ENCODE measurements at regions of chr11 and their contacts with region 1.

Region 1: GRCh38 chr11:69296890-69297786 is 3.2 kb downstream of the MYEOV start:
- DNase-seq: peak; percentile 91
- ATAC-seq: peak; percentile 66
- H3K4me3 ChIP-seq: peak overlapping the region; percentile 38; the same call in 1 of the 2 replicates
- H3K27ac ChIP-seq: peak overlapping the region; percentile 89
- H3K4me1 ChIP-seq: peaks cover 32% of the 10 kb centered on the region
- H3K27me3 ChIP-seq: no peaks in the 10 kb centered on the region
- CTCF ChIP-seq: no peak
- EP300 ChIP-seq: peak; percentile 78 to 90; a peak in 3 of 4 replicates
- POLR2A ChIP-seq: no peak
- RAD21 ChIP-seq: 0 out of 2 replicates have a peak, but pooled peaks have one; percentile 5

Region 2: DNA sequence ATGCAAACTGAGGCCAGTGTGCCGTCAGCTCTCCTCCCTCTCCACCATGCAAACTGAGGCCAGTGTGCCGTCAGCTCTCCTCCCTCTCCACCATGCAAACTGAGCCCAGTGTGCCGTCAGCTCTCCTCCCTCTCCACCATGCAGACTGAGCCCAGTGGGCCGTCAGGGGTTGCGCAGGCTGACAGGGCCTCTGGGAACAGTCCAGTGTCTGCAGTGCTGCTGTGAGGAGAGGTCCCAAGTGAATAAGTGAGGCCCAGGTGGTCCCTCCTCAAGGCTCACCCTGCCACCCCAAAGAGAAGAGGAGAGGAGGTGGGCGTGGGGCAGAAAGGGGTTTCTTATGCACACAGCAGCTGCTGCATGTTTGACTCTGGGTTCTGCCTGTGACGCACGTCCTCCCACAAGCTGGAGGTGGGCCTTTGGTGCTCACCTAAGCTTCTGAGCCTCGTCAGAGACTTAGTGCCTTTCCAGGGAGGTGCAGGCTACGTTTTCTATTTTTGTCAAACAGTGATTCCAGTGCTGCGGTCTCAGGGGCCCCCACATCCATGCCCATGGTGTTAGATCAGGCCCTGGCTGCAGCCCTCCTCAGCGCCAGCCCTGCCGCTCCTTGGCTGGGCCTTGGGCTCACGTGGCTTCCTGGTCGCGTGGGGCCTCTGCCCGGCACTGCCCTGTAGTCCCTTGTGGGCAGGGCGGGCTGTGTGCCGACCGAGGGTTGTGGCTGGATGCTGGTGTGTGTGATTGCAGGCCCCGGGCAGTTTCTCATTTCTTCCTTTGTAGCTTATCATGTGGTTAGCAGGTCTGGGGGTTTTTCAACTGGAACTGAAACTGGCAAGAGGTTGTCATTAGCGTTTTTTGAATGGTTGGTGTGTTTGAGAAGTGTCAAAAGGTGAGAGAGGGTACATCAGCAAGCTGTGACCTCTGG is 241.3 kb before region 1 on chr11:
- CTCF ChIA-PET with region 1: no interaction called
- POLR2A ChIA-PET with region 1: no interaction called
- RAD21 ChIA-PET with region 1: interaction called, 3 read pairs
- SMC1A ChIA-PET with region 1: interaction called, 5 read pairs
- in situ Hi-C with region 1: no loop called
- intact Hi-C with region 1: loop called (anchors 1 kb)
- DNase-seq: peak; percentile 94
- ATAC-seq: peak; percentile 85
- H3K4me3 ChIP-seq: peak overlapping the region; percentile 43; the same call in 1 of the 2 replicates
- H3K27ac ChIP-seq: peak overlapping the region; percentile 92
- H3K4me1 ChIP-seq: peaks cover 50% of the 10 kb centered on the region
- H3K27me3 ChIP-seq: no peaks in the 10 kb centered on the region
- CTCF ChIP-seq: no peak
- EP300 ChIP-seq: peak; percentile 85 to 87
- POLR2A ChIP-seq: peak; percentile 47; the same call in 1 of the 2 replicates
- RAD21 ChIP-seq: no peak

Region 3: GRCh38 chr11:69166218-69167115 is 130.7 kb before region 1 on chr11:
- CTCF ChIA-PET with region 1: interaction called, 3 read pairs
- POLR2A ChIA-PET with region 1: interaction called, 3 read pairs
- RAD21 ChIA-PET with region 1: interaction called, 15 read pairs
- SMC1A ChIA-PET with region 1: interaction called, 5 read pairs
- in situ Hi-C with region 1: no loop called
- intact Hi-C with region 1: loop called (anchors 2 kb)
- DNase-seq: peak; percentile 75
- ATAC-seq: peak; percentile 95
- H3K4me3 ChIP-seq: peak overlapping the region; percentile 49; the same call in 1 of the 2 replicates
- H3K27ac ChIP-seq: peak overlapping the region; percentile 83
- H3K4me1 ChIP-seq: peaks cover 21% of the 10 kb centered on the region
- H3K27me3 ChIP-seq: no peaks in the 10 kb centered on the region
- CTCF ChIP-seq: no peak
- EP300 ChIP-seq: peak; percentile 79 to 88
- POLR2A ChIP-seq: peak; percentile 60
- RAD21 ChIP-seq: 0 out of 2 replicates have a peak, but pooled peaks have one; percentile 29

Region 4: GRCh38 chr11:69280994-69281393 is 16.1 kb before region 1 on chr11:
- CTCF ChIA-PET with region 1: interaction called, 12 read pairs
- POLR2A ChIA-PET with region 1: interaction called, 5 read pairs
- RAD21 ChIA-PET with region 1: interaction called, 28 read pairs
- SMC1A ChIA-PET with region 1: interaction called, 11 read pairs
- in situ Hi-C with region 1: no loop called
- intact Hi-C with region 1: loop called (anchors 1 kb)
- DNase-seq: no peak
- ATAC-seq: no peak
- H3K4me3 ChIP-seq: no peak overlapping the region
- H3K27ac ChIP-seq: no peak overlapping the region
- H3K4me1 ChIP-seq: peaks cover 19% of the 10 kb centered on the region
- H3K27me3 ChIP-seq: no peaks in the 10 kb centered on the region; a peak in 1 of 4 replicates
- CTCF ChIP-seq: no peak
- EP300 ChIP-seq: no peak
- POLR2A ChIP-seq: no peak
- RAD21 ChIP-seq: no peak

Region 5: DNA sequence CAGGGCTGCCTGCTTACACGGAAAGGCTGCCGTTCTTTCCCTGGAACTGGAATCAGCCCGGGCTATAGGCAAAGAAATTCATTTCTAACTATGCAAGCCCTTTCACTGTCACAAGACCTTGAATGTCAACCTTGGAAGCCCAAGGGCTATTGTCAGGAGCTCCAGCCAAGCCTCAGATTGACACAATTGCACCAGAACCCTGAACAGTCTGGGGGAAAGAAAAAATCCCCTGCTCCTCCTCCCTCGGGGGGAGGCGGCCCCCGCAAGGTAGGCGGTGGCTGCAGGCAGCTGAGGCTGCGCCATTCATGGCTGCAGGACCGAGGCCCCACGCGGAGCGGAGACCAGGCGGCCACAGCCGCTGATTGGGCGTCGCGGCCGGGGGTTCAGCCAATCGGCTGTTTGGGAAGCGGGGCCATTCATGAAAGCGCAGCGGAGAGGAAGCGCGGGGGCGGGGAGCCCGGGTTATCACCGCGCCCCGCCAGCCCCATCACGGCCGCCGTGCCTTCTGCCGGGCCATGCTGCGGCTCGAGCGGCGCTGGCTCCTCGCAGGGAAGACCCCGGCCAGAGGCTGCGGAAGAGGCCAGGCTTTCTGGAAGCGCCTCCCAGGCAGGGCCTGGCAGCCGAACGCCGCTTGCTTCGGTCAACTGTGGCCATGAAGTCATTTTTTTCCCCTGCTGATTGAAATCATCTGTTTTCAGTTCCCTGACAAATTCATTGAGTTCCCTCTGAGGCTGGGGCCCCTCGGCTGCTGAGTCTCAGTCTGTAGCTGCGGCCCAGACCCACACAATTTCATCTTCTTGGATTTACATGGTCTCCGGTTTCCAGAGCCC is 146.2 kb after region 1 on chr11:
- CTCF ChIA-PET with region 1: no interaction called
- POLR2A ChIA-PET with region 1: no interaction called
- RAD21 ChIA-PET with region 1: interaction called, 12 read pairs
- SMC1A ChIA-PET with region 1: interaction called, 12 read pairs
- in situ Hi-C with region 1: no loop called
- intact Hi-C with region 1: loop called (anchors 5 kb)
- DNase-seq: peak; percentile 46
- ATAC-seq: peak; percentile 98
- H3K4me3 ChIP-seq: no peak overlapping the region
- H3K27ac ChIP-seq: peak overlapping the region; percentile 47
- H3K4me1 ChIP-seq: peaks cover 28% of the 10 kb centered on the region
- H3K27me3 ChIP-seq: no peaks in the 10 kb centered on the region; a peak in 1 of 4 replicates
- CTCF ChIP-seq: no peak
- EP300 ChIP-seq: peak; percentile 43 to 77; a peak in 1 of 4 replicates
- POLR2A ChIP-seq: peak; percentile 65
- RAD21 ChIP-seq: no peak

Region 6: GRCh38 chr11:69524282-69524911 is 227.3 kb after region 1 on chr11:
- CTCF ChIA-PET with region 1: no interaction called
- POLR2A ChIA-PET with region 1: no interaction called
- RAD21 ChIA-PET with region 1: no interaction called
- SMC1A ChIA-PET with region 1: no interaction called
- in situ Hi-C with region 1: no loop called
- intact Hi-C with region 1: no loop called
- DNase-seq: no peak
- ATAC-seq: no peak
- H3K4me3 ChIP-seq: no peak overlapping the region
- H3K27ac ChIP-seq: no peak overlapping the region
- H3K4me1 ChIP-seq: no peaks in the 10 kb centered on the region
- H3K27me3 ChIP-seq: no peaks in the 10 kb centered on the region; a peak in 1 of 4 replicates
- CTCF ChIP-seq: no peak
- EP300 ChIP-seq: no peak
- POLR2A ChIP-seq: no peak
- RAD21 ChIP-seq: no peak

Region 7: GRCh38 chr11:69670158-69670845 is 373.2 kb after region 1 on chr11:
- CTCF ChIA-PET with region 1: interaction called, 17 read pairs
- POLR2A ChIA-PET with region 1: no interaction called
- RAD21 ChIA-PET with region 1: interaction called, 5 read pairs
- SMC1A ChIA-PET with region 1: interaction called, 4 read pairs
- in situ Hi-C with region 1: no loop called
- intact Hi-C with region 1: no loop called
- DNase-seq: no peak
- ATAC-seq: peak; percentile 60
- H3K4me3 ChIP-seq: no peak overlapping the region
- H3K27ac ChIP-seq: no peak overlapping the region
- H3K4me1 ChIP-seq: no peaks in the 10 kb centered on the region; the same call in 1 of the 2 replicates
- H3K27me3 ChIP-seq: no peaks in the 10 kb centered on the region
- CTCF ChIP-seq: peak; percentile 92 to 95 (median 93); a peak in 5 of 6 replicates
- EP300 ChIP-seq: no peak
- POLR2A ChIP-seq: no peak
- RAD21 ChIP-seq: peak; percentile 50

Measured in GM12878 (cell line).